ENCODE measurements at regions of chr18 and their contacts with region 1.

Region 1: GRCh38 chr18:67217551-67218166 is 298.9 kb downstream of the DSEL start:
- DNase-seq: peak; percentile 62
- H3K4me3 Mint-ChIP-seq: no peak overlapping the region
- H3K27ac Mint-ChIP-seq: no peak overlapping the region
- H3K4me1 Mint-ChIP-seq: no peaks in the 10 kb centered on the region
- H3K27me3 Mint-ChIP-seq: no peaks in the 10 kb centered on the region
- CTCF ChIP-seq: peak; percentile 74

Region 2: GRCh38 chr18:67132919-67133318 is 84.7 kb before region 1 on chr18:
- CTCF ChIA-PET with region 1: no interaction called
- intact Hi-C with region 1: no loop called
- DNase-seq: no peak
- H3K4me3 Mint-ChIP-seq: no peak overlapping the region
- H3K27ac Mint-ChIP-seq: no peak overlapping the region
- H3K4me1 Mint-ChIP-seq: no peaks in the 10 kb centered on the region
- H3K27me3 Mint-ChIP-seq: no peaks in the 10 kb centered on the region
- CTCF ChIP-seq: no peak

Region 3: GRCh38 chr18:67845035-67845434 is 627.4 kb after region 1 on chr18:
- CTCF ChIA-PET with region 1: no interaction called
- intact Hi-C with region 1: loop called (anchors 2 kb)
- DNase-seq: no peak
- H3K4me3 Mint-ChIP-seq: no peak overlapping the region
- H3K27ac Mint-ChIP-seq: no peak overlapping the region
- H3K4me1 Mint-ChIP-seq: peaks cover 9% of the 10 kb centered on the region
- H3K27me3 Mint-ChIP-seq: no peaks in the 10 kb centered on the region
- CTCF ChIP-seq: no peak

Region 4: GRCh38 chr18:68623342-68623741 is 1405.7 kb after region 1 on chr18:
- CTCF ChIA-PET with region 1: no interaction called
- intact Hi-C with region 1: loop called (anchors 1 kb)
- DNase-seq: peak; percentile 60
- H3K4me3 Mint-ChIP-seq: no peak overlapping the region
- H3K27ac Mint-ChIP-seq: no peak overlapping the region
- H3K4me1 Mint-ChIP-seq: no peaks in the 10 kb centered on the region
- H3K27me3 Mint-ChIP-seq: no peaks in the 10 kb centered on the region
- CTCF ChIP-seq: peak; percentile 77

Region 5: DNA sequence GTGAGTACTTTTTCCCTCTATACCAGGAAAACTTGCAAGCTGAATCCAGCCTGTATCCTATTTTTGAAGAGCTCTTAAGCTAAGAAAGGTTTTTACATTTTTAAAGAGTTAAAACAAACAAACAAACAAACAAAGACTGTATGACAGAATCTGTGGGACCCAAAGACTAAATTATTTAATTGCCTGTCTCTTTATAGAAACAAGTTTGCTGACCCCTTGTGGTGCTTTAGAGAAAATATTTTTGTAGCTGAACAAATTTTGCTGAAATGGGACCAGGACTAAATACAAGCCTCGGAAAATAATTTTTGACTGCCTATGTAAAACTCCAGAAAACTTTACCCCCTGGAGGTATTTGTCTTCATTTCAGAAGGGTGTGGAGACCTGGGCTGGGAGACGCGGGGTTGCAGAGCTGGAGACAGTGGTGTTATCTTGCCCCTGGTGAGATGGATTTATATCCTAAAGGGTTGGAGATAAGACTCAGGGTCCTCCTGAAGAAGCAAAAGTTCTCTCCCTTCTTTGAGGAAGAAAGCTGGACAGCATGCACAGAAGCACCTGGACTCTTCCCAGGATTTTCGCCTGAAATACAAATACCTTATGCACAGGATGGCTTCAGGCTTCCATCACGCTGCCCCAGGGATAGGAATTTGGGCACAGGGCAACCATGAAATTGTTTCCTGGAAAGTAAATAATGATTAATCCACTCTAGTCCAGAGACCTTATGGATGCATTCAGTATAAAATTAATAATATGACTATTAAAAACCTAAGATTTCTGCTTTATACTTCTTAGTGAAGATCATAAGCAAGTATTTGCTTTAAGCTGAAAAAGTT is 1442.9 kb after region 1 on chr18:
- CTCF ChIA-PET with region 1: interaction called, 3 read pairs
- intact Hi-C with region 1: loop called (anchors 1 kb)
- DNase-seq: no peak
- H3K4me3 Mint-ChIP-seq: no peak overlapping the region
- H3K27ac Mint-ChIP-seq: no peak overlapping the region
- H3K4me1 Mint-ChIP-seq: no peaks in the 10 kb centered on the region
- H3K27me3 Mint-ChIP-seq: no peaks in the 10 kb centered on the region
- CTCF ChIP-seq: peak; percentile 50

Region 6: DNA sequence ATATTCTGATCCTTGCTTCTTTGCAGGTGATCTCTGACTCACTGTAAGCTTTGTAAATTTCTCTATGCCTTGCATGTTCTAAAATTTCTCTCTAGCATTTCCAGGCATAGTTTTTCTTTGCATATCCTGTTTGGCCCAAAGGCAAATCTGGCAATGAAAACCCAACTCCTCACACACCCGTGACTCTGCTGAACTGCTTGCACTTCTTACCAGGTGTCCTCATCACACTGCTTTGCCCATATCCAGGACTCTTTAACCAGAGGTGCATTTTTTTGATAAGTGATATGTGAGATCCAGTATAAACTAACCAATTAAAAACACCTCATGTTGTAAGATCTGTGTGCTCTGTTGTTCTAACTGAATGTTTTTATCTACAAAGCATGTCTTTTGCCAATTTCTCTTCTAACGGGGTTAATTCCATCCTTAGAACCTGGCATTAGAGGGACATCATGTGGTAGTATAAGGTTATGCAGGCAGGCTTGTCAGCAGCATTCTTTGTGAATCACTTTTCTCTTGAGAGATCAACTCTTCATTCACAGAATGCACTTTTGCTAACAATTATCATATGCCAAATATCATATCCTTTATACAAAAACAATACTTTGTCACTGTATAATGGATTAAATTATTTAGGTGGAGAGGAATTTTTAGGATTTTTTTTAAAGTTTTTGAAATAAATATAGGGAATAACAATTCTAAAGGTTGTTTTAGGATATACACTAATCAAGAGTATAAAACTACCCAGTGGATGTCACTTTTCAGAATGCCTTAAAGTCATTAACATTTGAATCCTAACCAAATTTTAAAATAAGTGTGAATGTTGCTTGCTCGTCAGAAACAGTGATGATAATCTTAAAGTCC is 1518.1 kb after region 1 on chr18:
- CTCF ChIA-PET with region 1: no interaction called
- intact Hi-C with region 1: loop called (anchors 2 kb)
- DNase-seq: no peak
- H3K4me3 Mint-ChIP-seq: no peak overlapping the region
- H3K27ac Mint-ChIP-seq: no peak overlapping the region
- H3K4me1 Mint-ChIP-seq: peaks cover 9% of the 10 kb centered on the region
- H3K27me3 Mint-ChIP-seq: no peaks in the 10 kb centered on the region
- CTCF ChIP-seq: no peak

Region 7: GRCh38 chr18:68840554-68841263 is 1623.0 kb after region 1 on chr18:
- CTCF ChIA-PET with region 1: no interaction called
- intact Hi-C with region 1: loop called (anchors 5 kb)
- DNase-seq: peak; percentile 26
- H3K4me3 Mint-ChIP-seq: no peak overlapping the region
- H3K27ac Mint-ChIP-seq: peak overlapping the region; percentile 71
- H3K4me1 Mint-ChIP-seq: peaks cover 12% of the 10 kb centered on the region
- H3K27me3 Mint-ChIP-seq: no peaks in the 10 kb centered on the region
- CTCF ChIP-seq: no peak

Measured in Calu3 (cell line).